Heart left ventricle (tissue), 16 donors: ENCODE measurements at regions of chr17 and their contacts with region 1.

Region 1: GRCh38 chr17:67800495-67800928 is 24.8 kb upstream of the BPTF start:
- DNase-seq: peak; percentile 73 to 81 (median 75)
- ATAC-seq: peak; percentile 55 to 94 (median 94)
- H3K4me3 ChIP-seq: no peak overlapping the region
- H3K27ac ChIP-seq: no peak overlapping the region
- H3K4me1 ChIP-seq: peaks cover 0 to 11% (median 0%) of the 10 kb centered on the region in 12 donors
- H3K27me3 ChIP-seq: no peaks in the 10 kb centered on the region
- CTCF ChIP-seq: peak; percentile 45 to 72 (median 60)
- POLR2A ChIP-seq: no peak

Region 2: DNA sequence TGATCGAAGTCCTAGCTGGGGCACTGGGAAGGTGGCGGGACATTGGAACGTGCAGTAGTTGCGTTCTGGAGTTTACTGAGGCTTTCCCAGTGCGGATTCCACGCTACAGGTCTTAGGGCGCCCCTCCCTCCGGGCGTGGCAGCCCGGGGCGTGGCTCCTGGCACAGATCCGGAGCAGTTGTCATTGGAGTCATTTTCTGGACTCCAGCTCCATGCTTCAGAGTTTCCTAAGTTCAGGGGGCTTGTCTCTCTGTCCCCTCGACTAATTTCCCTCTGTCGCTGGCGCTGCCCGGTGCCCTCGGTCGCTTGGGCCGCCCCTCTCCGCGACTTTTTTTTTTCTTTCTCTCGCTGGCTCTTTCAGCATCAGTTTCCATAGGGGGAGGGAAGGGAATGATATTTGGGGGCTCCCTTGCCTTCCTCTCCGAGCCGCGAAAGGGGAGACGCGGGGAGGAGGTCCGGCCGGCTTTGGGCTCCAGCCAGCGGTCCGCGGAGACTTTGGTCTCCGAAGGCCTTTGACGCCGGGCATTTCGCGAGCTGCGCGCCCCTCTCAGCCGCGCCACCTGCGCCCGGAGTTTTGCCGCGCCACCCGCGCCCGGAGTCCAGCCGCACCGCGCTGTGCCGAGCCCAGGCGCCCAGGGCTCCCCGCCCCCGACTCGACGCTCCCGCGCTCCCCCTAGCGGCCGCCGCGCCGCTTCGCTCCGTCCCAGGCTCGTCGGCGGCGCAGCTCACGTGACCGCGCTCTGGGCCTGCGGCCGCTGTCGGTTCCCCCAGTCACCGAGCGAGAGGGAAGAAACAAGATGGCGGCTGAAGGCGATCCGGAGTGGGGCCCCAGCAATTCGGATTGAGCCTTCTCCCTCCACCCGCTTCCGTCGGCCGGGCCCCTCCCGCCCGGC is 24.5 kb after region 1 on chr17 and contains the start of gene BPTF:
- intact Hi-C with region 1: loop called in 1 of 10 experiments (anchors 2 kb)
- DNase-seq: peak; percentile 92 to 96 (median 94)
- ATAC-seq: peak; percentile 94 to 98 (median 96)
- H3K4me3 ChIP-seq: peak within 1 kb of the TSS; percentile 51 to 90 (median 82)
- H3K27ac ChIP-seq: peak within 1 kb of the TSS; percentile 85 to 97 (median 94)
- H3K4me1 ChIP-seq: peaks cover 0 to 40% (median 29%) of the 10 kb centered on the region in 12 donors
- H3K27me3 ChIP-seq: peaks cover 0 to 3% (median 0%) of the 10 kb centered on the region in 9 donors
- CTCF ChIP-seq: peak; percentile 73 to 98 (median 95)
- POLR2A ChIP-seq: peak in 1 of 2 donors; percentile 43
- total RNA-seq, gene BPTF: 50.5 to 96.9 (median 77.6) TPM

Region 3: GRCh38 chr17:67855504-67856324 is 55.2 kb after region 1 on chr17:
- intact Hi-C with region 1: no loop called
- DNase-seq: no peak
- ATAC-seq: peak in 1 of 4 donors; percentile 43
- H3K4me3 ChIP-seq: peak overlapping the region in 1 of 12 donors; percentile 21
- H3K27ac ChIP-seq: peak overlapping the region in 1 of 12 donors; percentile 28
- H3K4me1 ChIP-seq: peaks cover 3 to 78% (median 48%) of the 10 kb centered on the region in 12 donors
- H3K27me3 ChIP-seq: no peaks in the 10 kb centered on the region
- CTCF ChIP-seq: no peak
- POLR2A ChIP-seq: no peak